PC-9 (cell line): ENCODE measurements at regions of chr6 and their contacts with region 1.

Region 1: GRCh38 chr6:13635948-13636658 is 21.0 kb downstream of the NOL7 start:
- DNase-seq: no peak
- H3K4me3 ChIP-seq: no peak overlapping the region
- H3K27ac ChIP-seq: no peak overlapping the region
- H3K4me1 ChIP-seq: no peaks in the 10 kb centered on the region
- H3K27me3 ChIP-seq: no peaks in the 10 kb centered on the region
- CTCF ChIP-seq: no peak

Region 2: DNA sequence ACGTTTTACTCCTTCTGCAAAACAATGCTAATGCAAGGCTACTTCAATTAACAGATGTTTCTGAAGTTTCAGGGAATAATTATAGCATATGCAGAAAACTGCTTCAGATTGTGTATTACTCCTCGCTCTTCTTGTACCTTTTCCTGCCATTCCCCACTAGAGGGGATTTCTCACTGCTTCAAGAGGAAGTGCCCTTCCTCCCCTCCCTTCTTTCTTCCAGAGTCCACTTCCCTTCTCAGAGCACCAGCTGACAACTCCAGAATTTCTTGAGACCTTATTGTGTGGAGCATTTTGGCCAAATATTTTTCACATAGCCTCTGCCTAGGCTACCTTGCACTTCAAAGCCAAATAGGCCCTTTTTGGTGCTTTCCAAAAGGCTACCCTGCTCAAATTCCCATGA is 190.9 kb after region 1 on chr6:
- CTCF ChIA-PET with region 1: no interaction called
- POLR2A ChIA-PET with region 1: no interaction called
- intact Hi-C with region 1: no loop called
- DNase-seq: no peak
- H3K4me3 ChIP-seq: no peak overlapping the region
- H3K27ac ChIP-seq: no peak overlapping the region
- H3K4me1 ChIP-seq: no peaks in the 10 kb centered on the region
- H3K27me3 ChIP-seq: no peaks in the 10 kb centered on the region
- CTCF ChIP-seq: no peak

Region 3: DNA sequence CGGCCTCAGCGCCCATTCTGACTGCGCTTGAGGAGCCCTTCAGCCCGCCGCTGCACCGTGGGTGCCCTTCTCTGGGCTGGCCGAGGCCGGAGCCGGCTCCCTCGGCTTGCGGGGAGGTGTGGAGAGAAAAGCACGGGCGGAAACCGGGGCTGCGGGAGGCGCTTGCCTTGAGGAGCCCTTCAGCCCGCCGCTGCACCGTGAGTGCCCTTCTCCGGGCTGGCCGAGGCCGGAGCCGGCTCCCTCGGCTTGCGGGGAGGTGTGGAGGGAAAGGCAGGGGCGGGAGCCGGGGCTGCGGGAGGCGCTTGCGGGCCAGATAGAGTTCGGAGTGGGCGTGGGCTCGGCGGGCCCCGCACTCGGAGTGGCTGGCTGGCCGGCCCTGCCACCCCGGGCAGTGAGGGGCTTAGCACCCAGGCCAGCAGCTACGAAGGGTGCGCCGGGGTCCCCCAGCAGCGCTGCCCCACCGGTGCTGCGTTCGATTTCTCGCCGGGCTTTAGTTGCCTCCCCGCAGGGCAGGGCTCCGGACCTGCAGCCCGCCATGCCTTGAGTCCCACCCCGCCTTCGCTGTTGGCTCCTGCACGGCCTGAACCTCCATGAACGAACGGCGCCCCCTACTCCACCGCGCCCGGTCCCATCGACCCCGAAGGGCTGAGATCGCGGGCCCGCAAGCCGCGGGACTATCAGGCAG is 223.9 kb after region 1 on chr6:
- CTCF ChIA-PET with region 1: interaction called, 11 read pairs
- POLR2A ChIA-PET with region 1: no interaction called
- intact Hi-C with region 1: no loop called
- DNase-seq: no peak
- H3K4me3 ChIP-seq: no peak overlapping the region
- H3K27ac ChIP-seq: no peak overlapping the region
- H3K4me1 ChIP-seq: peaks cover 19% of the 10 kb centered on the region
- H3K27me3 ChIP-seq: no peaks in the 10 kb centered on the region
- CTCF ChIP-seq: no peak